A549 (cell line): ENCODE measurements at regions of chr20 and their contacts with region 1.

Region 1: DNA sequence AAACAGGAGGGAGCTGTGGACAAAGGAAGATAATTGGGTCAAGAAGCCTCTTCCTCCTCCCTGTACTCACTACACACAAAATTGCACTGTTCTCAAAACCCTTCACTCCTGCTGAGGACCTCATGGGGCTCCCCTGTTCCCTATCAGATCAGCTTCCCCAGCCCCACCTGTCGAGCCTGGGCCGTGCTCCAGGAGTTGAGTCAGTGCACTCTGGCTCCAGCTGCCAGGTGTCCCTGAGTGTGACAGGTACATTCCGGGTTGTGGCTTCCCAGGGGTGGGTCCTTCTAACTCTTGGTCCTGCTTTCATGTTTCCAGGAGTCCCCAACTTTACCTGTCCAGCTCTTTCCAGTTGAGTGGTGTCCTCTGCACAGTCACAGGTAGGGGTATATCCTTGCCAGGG is 8.4 kb downstream of the RAB5IF start:
- DNase-seq: no peak
- ATAC-seq: no peak
- H3K4me3 ChIP-seq: no peak overlapping the region
- H3K27ac ChIP-seq: no peak overlapping the region
- H3K4me1 ChIP-seq: no peaks in the 10 kb centered on the region
- CTCF ChIP-seq: no peak
- EP300 ChIP-seq: no peak
- POLR2A ChIP-seq: no peak
- RAD21 ChIP-seq: no peak

Region 2: GRCh38 chr20:36624068-36624943 is 10.3 kb after region 1 on chr20:
- CTCF ChIA-PET with region 1: interaction called, 15 read pairs
- POLR2A ChIA-PET with region 1: no interaction called
- DNase-seq: no peak
- ATAC-seq: peak; percentile 63 to 72; a peak in 4 of 6 replicates
- H3K4me3 ChIP-seq: no peak overlapping the region
- H3K27ac ChIP-seq: peak overlapping the region in 1 of 2 experiments; percentile 22; a peak in 1 of 6 replicates
- H3K4me1 ChIP-seq: no peaks in the 10 kb centered on the region
- CTCF ChIP-seq: no peak
- EP300 ChIP-seq: no peak
- POLR2A ChIP-seq: no peak
- RAD21 ChIP-seq: no peak

Region 3: DNA sequence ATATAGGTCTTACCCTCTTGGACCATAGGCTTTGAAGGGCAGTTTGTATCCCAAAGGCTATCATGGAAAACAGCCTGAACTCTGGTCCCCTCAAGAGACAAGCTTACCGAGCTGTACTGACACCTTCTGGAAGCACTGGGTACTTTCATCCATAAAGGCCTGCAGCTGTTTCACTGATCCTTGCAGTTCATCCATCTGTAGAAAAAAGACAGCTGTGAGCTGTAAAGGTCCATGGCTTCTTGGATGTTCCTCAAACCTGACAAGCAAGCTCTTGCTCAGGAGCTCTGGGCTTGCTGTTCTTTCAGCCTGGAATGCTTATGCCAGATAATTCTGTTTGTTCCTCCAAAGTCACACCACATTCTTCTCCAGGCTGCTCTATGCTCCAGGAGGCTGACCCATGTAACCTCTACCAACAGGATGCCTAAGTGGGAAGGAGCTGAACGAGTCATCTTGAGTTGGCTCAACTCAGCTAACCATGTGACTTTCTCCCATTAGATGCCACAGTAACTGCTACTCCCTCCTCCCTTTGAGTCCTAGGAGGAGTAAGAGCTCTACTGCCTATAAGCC is 140.8 kb after region 1 on chr20:
- CTCF ChIA-PET with region 1: interaction called, 43 read pairs
- POLR2A ChIA-PET with region 1: no interaction called
- DNase-seq: peak; percentile 76 to 77
- ATAC-seq: peak; percentile 96 to 97
- H3K4me3 ChIP-seq: no peak overlapping the region
- H3K27ac ChIP-seq: no peak overlapping the region
- H3K4me1 ChIP-seq: no peaks in the 10 kb centered on the region
- CTCF ChIP-seq: peak; percentile 68
- EP300 ChIP-seq: no peak
- POLR2A ChIP-seq: no peak
- RAD21 ChIP-seq: peak; percentile 66 to 67

Region 4: DNA sequence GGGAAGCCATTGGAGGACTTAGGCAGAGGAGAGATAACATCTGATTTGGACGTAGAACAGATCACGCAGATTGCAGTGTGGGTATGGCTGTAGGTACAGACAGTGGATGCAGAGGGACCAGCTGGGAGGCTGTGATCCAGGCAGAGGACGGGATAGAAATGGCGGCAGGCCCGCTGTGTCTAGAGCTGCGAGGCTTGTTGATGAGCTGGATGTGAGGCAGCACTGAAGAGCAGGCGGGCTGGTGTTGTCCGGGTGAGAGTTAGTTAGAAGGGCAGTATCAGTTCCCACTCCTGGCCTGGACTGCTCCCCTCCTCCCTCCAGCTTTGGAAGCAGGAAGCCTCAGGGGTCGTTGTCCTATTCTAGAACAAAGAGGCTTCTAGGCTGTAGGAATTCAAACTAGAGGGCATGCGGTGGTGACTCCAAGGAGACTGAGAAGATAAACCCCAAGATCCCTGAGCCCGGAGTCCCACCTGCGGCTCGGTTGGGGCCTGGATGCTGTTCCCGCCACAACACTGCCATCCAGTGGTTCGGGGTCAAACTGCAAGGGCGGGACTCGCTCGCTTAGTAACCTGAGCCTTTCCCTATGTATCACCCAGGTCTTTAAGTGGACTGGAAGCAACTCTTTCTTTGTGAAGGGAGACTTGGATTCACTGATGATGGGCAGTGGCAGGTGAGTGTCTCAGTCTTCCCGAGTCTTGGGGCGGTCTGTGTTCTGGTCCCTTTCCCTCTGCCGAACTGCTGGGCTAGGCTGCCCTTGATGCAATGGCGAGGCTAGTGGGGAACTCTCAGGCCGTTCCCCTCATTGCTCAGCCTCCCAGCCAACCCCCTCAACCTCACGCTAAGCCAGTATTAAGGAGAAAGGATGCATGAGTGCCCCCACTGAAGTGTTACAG is 273.1 kb after region 1 on chr20:
- CTCF ChIA-PET with region 1: interaction called, 18 read pairs
- POLR2A ChIA-PET with region 1: no interaction called
- DNase-seq: peak; percentile 80 to 90
- ATAC-seq: peak; percentile 93 to 97
- H3K4me3 ChIP-seq: no peak overlapping the region
- H3K27ac ChIP-seq: peak overlapping the region; percentile 24 to 64; a peak in 4 of 6 replicates
- H3K4me1 ChIP-seq: no peaks in the 10 kb centered on the region
- CTCF ChIP-seq: peak; percentile 92
- EP300 ChIP-seq: no peak
- POLR2A ChIP-seq: no peak
- RAD21 ChIP-seq: peak; percentile 93 to 96

Region 5: DNA sequence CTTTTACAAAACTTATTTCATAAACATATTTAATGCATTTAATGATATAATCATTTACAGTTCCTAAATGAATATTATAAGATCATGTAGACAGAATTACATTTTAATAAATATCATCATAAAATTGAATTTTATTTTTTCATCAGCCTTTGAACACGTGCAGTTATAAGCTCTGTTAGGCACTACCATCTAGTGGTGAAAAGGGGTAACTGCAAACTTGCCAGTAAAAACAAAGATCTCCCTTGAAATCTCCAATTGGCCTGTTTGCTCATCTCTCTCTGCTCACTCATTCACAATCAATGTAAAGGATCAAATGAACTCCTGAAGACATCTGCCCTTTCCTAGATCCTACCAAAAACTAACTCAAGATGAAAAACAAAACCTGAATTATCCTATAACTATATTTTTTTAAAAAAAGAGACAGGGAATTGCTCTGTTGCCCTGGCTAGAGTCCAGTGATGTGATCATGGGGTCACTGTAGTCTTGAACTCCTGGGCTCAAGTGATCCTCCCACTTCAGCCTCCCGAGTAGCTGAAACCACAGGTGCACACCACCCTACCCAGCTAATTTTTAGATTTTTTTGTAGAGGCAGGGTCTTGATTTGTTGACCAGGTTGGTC is 305.9 kb after region 1 on chr20:
- CTCF ChIA-PET with region 1: interaction called, 13 read pairs
- POLR2A ChIA-PET with region 1: no interaction called
- DNase-seq: peak; percentile 50 to 63
- ATAC-seq: peak in 1 of 2 experiments; percentile 65; a peak in 3 of 6 replicates
- H3K4me3 ChIP-seq: no peak overlapping the region
- H3K27ac ChIP-seq: no peak overlapping the region
- H3K4me1 ChIP-seq: peaks cover 11% of the 10 kb centered on the region
- CTCF ChIP-seq: peak; percentile 86
- EP300 ChIP-seq: no peak
- POLR2A ChIP-seq: no peak
- RAD21 ChIP-seq: peak; percentile 71 to 81